Activated CD4-positive, alpha-beta memory T cell treated with anti-CD3 and anti-CD28 coated beads, Interleukin-2, amount 10 ng/mL, durations not matched to agents 7 days and 5 days (primary cell): ENCODE measurements at regions of chr17 and their contacts with region 1.

Region 1: GRCh38 chr17:76772842-76773525 is 35.1 kb downstream of the MFSD11 start:
- DNase-seq: peak; percentile 56
- H3K4me3 Mint-ChIP-seq: peak overlapping the region; percentile 78
- H3K27ac Mint-ChIP-seq: peak overlapping the region; percentile 90
- H3K4me1 Mint-ChIP-seq: peaks cover 30% of the 10 kb centered on the region
- H3K27me3 Mint-ChIP-seq: no peaks in the 10 kb centered on the region

Region 2: GRCh38 chr17:76714822-76715495 is 58.0 kb before region 1 on chr17:
- CTCF ChIA-PET with region 1: no interaction called
- POLR2A ChIA-PET with region 1: no interaction called
- DNase-seq: peak; percentile 78
- H3K4me3 Mint-ChIP-seq: no peak overlapping the region
- H3K27ac Mint-ChIP-seq: peak overlapping the region; percentile 86
- H3K4me1 Mint-ChIP-seq: peaks cover 47% of the 10 kb centered on the region
- H3K27me3 Mint-ChIP-seq: no peaks in the 10 kb centered on the region

Region 3: GRCh38 chr17:76726231-76726775 is 46.7 kb before region 1 on chr17 and contains the start of gene JMJD6:
- CTCF ChIA-PET with region 1: no interaction called
- POLR2A ChIA-PET with region 1: interaction called, 18 read pairs
- DNase-seq: peak; percentile 97
- H3K4me3 Mint-ChIP-seq: peak within 1 kb of the TSS; percentile 91
- H3K27ac Mint-ChIP-seq: peak within 1 kb of the TSS; percentile 94
- H3K4me1 Mint-ChIP-seq: peaks cover 58% of the 10 kb centered on the region
- H3K27me3 Mint-ChIP-seq: no peaks in the 10 kb centered on the region
- total RNA-seq, gene JMJD6: 66.8 to 68.0 TPM

Region 4: DNA sequence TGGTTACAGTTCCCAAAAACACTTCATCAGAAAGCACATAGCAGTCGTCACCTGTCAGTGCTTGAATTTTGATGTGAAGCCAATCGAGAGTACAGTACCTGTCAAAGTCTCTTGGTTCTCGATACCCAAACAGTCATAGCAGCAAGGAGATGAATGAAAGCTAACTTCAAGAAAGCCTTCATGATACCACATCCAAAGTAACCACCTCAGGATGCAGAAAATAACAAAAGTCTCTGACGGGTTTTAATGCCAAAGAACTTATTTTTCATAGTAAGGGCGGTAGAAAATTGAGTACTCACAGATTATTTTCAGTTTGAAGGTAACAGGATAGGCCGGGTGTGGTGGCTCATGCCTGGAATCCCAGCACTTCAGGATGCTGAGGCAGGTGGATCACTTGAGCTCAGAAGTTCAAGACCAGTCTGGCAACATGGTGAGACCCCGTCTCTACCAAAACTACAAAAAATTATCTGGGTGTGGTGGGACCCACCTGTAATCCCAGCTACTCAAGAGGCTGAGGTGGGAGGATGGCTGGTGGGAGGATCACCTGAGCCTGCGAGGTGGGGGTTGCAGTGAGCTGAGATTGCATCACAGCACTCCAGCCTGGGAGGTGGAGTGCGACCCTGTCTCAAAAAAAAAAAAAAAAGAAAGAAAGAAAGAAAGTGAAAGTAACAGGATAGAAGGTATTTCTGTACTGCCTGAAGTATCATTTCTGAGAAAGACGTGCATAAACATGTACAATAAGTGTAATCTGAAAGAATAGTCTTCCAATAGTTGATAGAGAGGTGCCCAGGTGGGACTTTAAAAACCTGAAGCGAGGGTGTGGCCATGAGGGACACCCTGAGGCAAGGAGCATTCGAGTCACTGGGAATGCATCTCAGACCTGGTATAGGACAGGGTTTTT is 19.7 kb before region 1 on chr17:
- CTCF ChIA-PET with region 1: no interaction called
- POLR2A ChIA-PET with region 1: interaction called, 20 read pairs
- DNase-seq: no peak
- H3K4me3 Mint-ChIP-seq: peak overlapping the region; percentile 82
- H3K27ac Mint-ChIP-seq: peak overlapping the region; percentile 88
- H3K4me1 Mint-ChIP-seq: peaks cover 25% of the 10 kb centered on the region
- H3K27me3 Mint-ChIP-seq: no peaks in the 10 kb centered on the region

Region 5: GRCh38 chr17:76848670-76849069 is 75.7 kb after region 1 on chr17:
- CTCF ChIA-PET with region 1: no interaction called
- POLR2A ChIA-PET with region 1: no interaction called
- DNase-seq: no peak
- H3K4me3 Mint-ChIP-seq: no peak overlapping the region
- H3K27ac Mint-ChIP-seq: no peak overlapping the region
- H3K4me1 Mint-ChIP-seq: no peaks in the 10 kb centered on the region
- H3K27me3 Mint-ChIP-seq: peaks cover 28% of the 10 kb centered on the region